ENCODE measurements at regions of chr20 and their contacts with region 1.

Region 1: DNA sequence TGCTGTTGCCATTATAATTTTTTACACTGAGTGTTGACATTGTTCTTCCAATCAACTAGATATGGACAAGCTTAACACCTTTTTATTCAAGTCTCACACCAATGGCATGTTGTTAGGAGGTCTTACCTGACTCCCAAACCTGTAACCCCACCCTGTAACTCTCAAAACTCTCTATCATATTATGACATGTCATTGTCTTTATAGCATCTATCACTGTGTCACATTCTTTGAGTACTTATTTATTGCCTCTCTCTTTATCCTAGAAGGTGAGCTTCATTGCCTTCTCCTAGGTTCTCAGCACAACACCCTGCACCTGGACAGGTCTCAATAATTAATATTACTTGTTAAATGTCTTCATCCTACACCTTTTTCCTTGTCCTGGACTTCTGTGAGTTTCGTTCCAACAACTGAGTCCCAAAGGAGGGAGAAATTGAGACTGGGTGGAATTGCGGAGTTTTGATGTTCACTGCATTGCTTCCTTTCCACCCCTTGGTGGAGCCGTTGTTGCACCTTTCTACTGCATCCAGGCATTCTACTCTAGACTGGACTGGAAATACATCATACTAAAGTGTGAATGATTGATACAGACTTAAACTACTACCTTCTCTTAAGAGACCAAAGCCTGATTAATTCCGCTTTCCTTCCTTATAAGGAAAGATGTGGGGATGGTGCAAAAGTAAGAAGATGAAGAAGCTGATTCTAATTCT is 338.0 kb upstream of the CHD6 start:
- DNase-seq: peak in 1 of 2 experiments; percentile 3
- H3K4me3 ChIP-seq: no peak overlapping the region
- H3K27ac ChIP-seq: no peak overlapping the region
- H3K4me1 ChIP-seq: no peaks in the 10 kb centered on the region
- H3K27me3 ChIP-seq: no peaks in the 10 kb centered on the region; a peak in 1 of 7 replicates
- CTCF ChIP-seq: peak; percentile 60 to 84 (median 79)
- EP300 ChIP-seq: no peak
- POLR2A ChIP-seq: no peak
- RAD21 ChIP-seq: peak; percentile 96

Region 2: DNA sequence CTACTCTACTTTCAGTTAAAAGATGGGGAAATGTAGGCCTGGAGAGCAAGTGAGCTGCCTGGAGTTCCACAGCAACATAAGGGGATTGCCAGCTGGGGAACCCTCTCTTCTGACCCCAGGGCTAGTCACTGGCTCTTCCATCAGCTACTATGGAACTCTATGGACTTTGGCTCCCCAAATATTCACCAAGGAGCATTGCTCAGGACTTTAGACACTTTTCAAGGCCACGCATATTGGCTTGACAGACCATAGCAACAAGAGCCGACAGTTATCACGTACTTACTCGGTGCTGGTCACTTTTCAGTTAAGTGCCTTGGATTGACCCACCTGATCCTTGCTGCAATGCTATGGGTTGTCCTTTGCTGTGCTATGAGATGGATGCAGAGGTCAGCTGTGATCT is 22.7 kb after region 1 on chr20:
- CTCF ChIA-PET with region 1: interaction called, 14 read pairs
- POLR2A ChIA-PET with region 1: no interaction called
- DNase-seq: no peak
- H3K4me3 ChIP-seq: no peak overlapping the region
- H3K27ac ChIP-seq: no peak overlapping the region
- H3K4me1 ChIP-seq: no peaks in the 10 kb centered on the region; a peak in 1 of 7 replicates
- H3K27me3 ChIP-seq: no peaks in the 10 kb centered on the region
- CTCF ChIP-seq: no peak
- EP300 ChIP-seq: no peak
- POLR2A ChIP-seq: no peak
- RAD21 ChIP-seq: no peak

Region 3: DNA sequence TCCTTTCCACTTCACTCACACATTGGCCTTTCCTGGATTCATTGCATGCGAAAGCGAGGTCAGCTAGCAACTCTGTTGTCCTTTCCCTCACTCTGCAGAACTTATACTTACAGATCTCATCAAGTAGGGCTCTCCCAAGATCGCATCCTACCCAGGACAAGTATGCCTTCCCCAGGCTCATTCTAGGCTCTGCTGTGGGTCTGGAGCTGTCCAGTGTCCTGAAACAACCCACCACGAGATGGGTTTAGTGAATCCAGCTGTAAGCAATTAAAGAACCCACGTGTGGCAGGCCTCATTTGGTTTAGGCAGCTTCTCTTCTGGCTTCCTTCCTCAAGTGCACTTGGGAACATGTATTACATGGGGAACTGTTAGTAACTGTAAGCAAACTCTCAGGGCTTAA is 68.5 kb after region 1 on chr20:
- CTCF ChIA-PET with region 1: interaction called, 10 read pairs
- POLR2A ChIA-PET with region 1: no interaction called
- DNase-seq: peak; percentile 17 to 64
- H3K4me3 ChIP-seq: no peak overlapping the region
- H3K27ac ChIP-seq: no peak overlapping the region
- H3K4me1 ChIP-seq: no peaks in the 10 kb centered on the region
- H3K27me3 ChIP-seq: no peaks in the 10 kb centered on the region
- CTCF ChIP-seq: no peak
- EP300 ChIP-seq: no peak
- POLR2A ChIP-seq: no peak
- RAD21 ChIP-seq: peak; percentile 13 to 24; a peak in 2 of 4 replicates

Region 4: GRCh38 chr20:42041072-42041471 is 84.9 kb after region 1 on chr20:
- CTCF ChIA-PET with region 1: interaction called, 19 read pairs
- POLR2A ChIA-PET with region 1: no interaction called
- DNase-seq: no peak
- H3K4me3 ChIP-seq: no peak overlapping the region
- H3K27ac ChIP-seq: no peak overlapping the region
- H3K4me1 ChIP-seq: no peaks in the 10 kb centered on the region
- H3K27me3 ChIP-seq: no peaks in the 10 kb centered on the region
- CTCF ChIP-seq: peak in 2 of 3 experiments; percentile 27 to 31; a peak in 3 of 4 replicates
- EP300 ChIP-seq: no peak
- POLR2A ChIP-seq: no peak
- RAD21 ChIP-seq: peak; percentile 34 to 47; a peak in 3 of 4 replicates

Measured in H1 (cell line).